Activated CD4-positive, alpha-beta memory T cell treated with anti-CD3 and anti-CD28 coated beads for 36 hours (primary cell): ENCODE measurements at regions of chr5 and their contacts with region 1.

Region 1: GRCh38 chr5:131417240-131417869 is 153.5 kb downstream of the CDC42SE2 start:
- DNase-seq: peak; percentile 88
- H3K4me3 Mint-ChIP-seq: peak overlapping the region; percentile 49
- H3K27ac Mint-ChIP-seq: peak overlapping the region; percentile 80
- H3K4me1 Mint-ChIP-seq: peaks cover 41% of the 10 kb centered on the region
- H3K27me3 Mint-ChIP-seq: no peaks in the 10 kb centered on the region

Region 2: DNA sequence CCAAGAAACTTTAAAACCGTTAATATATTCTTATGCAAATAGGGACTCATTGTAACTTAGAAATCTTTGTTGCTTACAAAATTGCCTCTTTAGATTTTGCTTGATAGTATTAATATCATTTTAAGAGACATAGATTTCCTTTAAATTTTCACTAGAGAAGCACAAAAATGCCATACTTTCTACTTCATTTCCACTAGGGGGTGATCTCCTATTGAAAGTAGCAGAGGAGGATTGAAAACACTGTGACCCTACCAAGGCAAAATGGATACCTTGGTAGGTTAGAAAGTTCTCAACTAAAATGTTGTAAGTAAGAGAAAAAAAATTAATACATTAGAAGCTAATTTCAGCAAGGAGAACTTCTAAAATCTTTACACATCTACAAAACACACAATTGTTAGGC is 1308.2 kb before region 1 on chr5:
- CTCF ChIA-PET with region 1: no interaction called
- POLR2A ChIA-PET with region 1: no interaction called
- intact Hi-C with region 1: loop called (anchors 5 kb)
- DNase-seq: no peak
- H3K4me3 Mint-ChIP-seq: no peak overlapping the region
- H3K27ac Mint-ChIP-seq: no peak overlapping the region
- H3K4me1 Mint-ChIP-seq: no peaks in the 10 kb centered on the region
- H3K27me3 Mint-ChIP-seq: no peaks in the 10 kb centered on the region

Region 3: GRCh38 chr5:130871346-130872086 is 545.8 kb before region 1 on chr5:
- CTCF ChIA-PET with region 1: interaction called, 5 read pairs
- POLR2A ChIA-PET with region 1: no interaction called
- intact Hi-C with region 1: loop called (anchors 1 kb)
- DNase-seq: peak; percentile 40
- H3K4me3 Mint-ChIP-seq: no peak overlapping the region
- H3K27ac Mint-ChIP-seq: no peak overlapping the region
- H3K4me1 Mint-ChIP-seq: peaks cover 8% of the 10 kb centered on the region
- H3K27me3 Mint-ChIP-seq: no peaks in the 10 kb centered on the region

Region 4: DNA sequence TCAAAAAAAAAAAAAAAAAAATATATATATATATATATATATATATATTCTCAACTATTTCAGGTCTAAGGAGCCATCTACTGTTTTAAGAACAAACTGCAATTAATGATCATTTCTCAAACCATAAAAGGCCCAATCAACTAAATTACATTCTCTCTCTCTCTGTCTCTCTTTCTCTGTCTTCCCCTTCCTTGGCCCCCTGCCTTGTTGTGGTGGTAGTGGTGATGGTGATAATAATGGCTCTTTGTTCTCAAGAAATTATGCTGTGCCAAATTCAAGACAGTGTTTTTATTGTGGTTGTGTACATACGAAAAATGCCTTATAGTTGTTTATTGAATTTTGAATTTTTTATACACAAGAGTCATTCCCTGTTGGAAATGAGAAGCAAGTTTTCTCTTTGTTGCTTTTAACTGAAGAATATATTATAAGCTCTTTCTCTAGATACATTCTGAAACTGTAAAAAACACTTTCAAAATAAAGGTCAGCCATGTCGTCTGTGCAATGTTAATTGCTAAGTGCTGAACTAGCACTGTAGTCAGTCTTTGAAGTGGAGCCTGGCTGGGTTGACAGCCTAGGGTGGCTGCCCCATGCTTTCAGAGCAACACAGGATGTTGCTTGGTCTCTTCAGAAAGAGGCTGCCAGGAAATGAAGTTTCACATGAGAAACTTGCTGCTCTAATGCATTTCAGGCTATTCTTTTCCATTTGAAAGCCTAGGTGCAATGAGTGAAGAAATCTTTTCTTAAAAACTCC is 348.3 kb before region 1 on chr5:
- CTCF ChIA-PET with region 1: no interaction called
- POLR2A ChIA-PET with region 1: no interaction called
- intact Hi-C with region 1: loop called (anchors 5 kb)
- DNase-seq: peak; percentile 79
- H3K4me3 Mint-ChIP-seq: peak overlapping the region; percentile 1
- H3K27ac Mint-ChIP-seq: peak overlapping the region; percentile 90
- H3K4me1 Mint-ChIP-seq: peaks cover 49% of the 10 kb centered on the region
- H3K27me3 Mint-ChIP-seq: no peaks in the 10 kb centered on the region

Region 5: GRCh38 chr5:131109540-131110255 is 307.7 kb before region 1 on chr5:
- CTCF ChIA-PET with region 1: no interaction called
- POLR2A ChIA-PET with region 1: no interaction called
- intact Hi-C with region 1: loop called (anchors 5 kb)
- DNase-seq: no peak
- H3K4me3 Mint-ChIP-seq: no peak overlapping the region
- H3K27ac Mint-ChIP-seq: no peak overlapping the region
- H3K4me1 Mint-ChIP-seq: peaks cover 3% of the 10 kb centered on the region
- H3K27me3 Mint-ChIP-seq: no peaks in the 10 kb centered on the region

Region 6: DNA sequence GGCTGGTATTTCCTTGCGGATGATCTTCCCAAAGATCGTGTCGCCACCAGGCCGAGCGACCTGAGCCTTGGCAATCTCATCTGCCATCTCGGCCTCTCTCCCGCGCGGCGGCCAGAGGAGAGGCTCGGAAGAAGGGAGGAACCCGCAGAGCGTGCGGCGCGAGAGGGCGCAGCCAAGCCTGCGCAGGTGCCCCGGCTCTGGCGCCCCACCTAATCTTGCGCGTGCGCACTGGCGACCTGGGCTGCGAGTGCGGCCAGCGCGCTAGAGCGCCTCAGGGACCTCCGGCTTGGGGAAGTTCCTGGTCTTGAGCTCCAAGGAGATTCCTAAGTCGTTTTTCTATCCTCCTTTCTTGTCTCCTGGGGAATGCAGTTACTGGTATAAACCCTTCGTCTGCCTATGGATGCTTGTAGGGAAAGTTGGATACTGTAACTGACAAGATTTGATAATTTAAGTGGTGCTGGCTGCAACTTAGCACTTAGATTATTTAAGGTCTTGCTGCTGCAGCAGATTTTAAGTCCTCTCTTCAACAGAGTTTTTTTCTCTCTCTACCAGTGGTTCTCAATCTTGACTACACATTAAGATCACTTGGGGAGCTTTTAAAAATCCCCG is 252.1 kb before region 1 on chr5 and contains the start of gene HINT1:
- CTCF ChIA-PET with region 1: interaction called, 3 read pairs
- POLR2A ChIA-PET with region 1: no interaction called
- intact Hi-C with region 1: loop called (anchors 1 kb)
- DNase-seq: peak; percentile 95
- H3K4me3 Mint-ChIP-seq: peak within 1 kb of the TSS; percentile 98
- H3K27ac Mint-ChIP-seq: peak within 1 kb of the TSS; percentile 99
- H3K4me1 Mint-ChIP-seq: peaks cover 45% of the 10 kb centered on the region
- H3K27me3 Mint-ChIP-seq: no peaks in the 10 kb centered on the region
- total RNA-seq, gene HINT1: 349 to 361 TPM

Region 7: DNA sequence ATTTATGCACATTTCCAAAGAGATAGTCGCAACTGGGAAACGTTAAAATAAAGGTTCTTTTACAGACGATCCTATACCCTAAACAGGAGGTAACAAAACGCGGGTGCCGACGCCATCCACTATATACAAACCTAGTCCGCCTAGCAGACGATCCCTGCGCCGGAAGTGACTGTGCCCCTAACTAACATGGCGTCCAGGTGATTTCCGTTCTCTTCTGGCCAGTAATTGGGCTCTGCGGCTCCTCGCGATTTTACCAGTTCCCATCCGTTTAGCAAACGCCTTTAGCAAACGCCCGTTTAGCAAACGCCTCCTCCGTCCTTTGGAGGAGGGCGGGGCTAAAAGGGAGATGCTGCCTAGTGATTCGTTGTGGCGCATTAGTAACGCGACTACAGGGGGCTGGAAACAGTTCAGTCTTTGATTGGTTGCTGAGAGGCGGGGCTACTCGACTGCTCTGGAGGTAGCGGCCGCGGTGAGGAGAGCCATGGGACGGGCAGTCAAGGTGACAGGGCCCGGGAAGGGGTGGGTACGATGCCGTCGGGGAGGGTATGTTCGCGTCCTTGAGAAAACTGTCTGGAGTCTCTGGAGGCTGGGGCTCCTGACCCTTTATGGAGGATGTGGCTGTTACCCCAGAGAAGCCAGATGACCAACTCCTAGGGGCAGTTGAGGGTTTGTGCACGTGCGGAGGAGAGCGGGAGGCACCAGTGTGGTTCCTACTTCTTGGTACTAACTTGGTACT is 246.6 kb before region 1 on chr5 and contains the start of gene LYRM7:
- CTCF ChIA-PET with region 1: interaction called, 3 read pairs
- POLR2A ChIA-PET with region 1: no interaction called
- intact Hi-C with region 1: loop called (anchors 1 kb)
- DNase-seq: peak; percentile 98
- H3K4me3 Mint-ChIP-seq: peak within 1 kb of the TSS; percentile 97
- H3K27ac Mint-ChIP-seq: peak within 1 kb of the TSS; percentile 92
- H3K4me1 Mint-ChIP-seq: peaks cover 37% of the 10 kb centered on the region
- H3K27me3 Mint-ChIP-seq: no peaks in the 10 kb centered on the region
- total RNA-seq, gene LYRM7: 16.6 to 18.6 TPM

Region 8: DNA sequence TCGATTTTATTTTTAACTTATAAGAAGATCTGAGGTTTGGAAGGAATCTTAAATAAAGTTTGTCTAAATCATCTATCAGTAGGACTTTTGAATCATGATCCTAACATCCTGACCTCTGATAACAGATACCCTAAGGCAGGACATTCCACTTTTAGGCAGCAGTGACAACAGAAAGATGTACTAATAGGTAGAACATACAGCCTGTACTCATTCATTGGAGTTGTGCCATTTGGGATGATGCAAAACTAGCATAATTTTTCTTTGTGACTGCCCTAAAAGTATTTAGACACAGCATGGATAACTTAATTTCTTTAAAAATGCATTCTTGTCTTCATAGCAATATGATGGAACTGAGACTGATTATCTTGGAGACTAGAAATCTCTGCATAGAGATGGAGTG is 113.8 kb before region 1 on chr5:
- CTCF ChIA-PET with region 1: no interaction called
- POLR2A ChIA-PET with region 1: no interaction called
- intact Hi-C with region 1: no loop called
- DNase-seq: no peak
- H3K4me3 Mint-ChIP-seq: no peak overlapping the region
- H3K27ac Mint-ChIP-seq: peak overlapping the region; percentile 61
- H3K4me1 Mint-ChIP-seq: peaks cover 66% of the 10 kb centered on the region
- H3K27me3 Mint-ChIP-seq: no peaks in the 10 kb centered on the region

Region 9: GRCh38 chr5:131450953-131451352 is 33.6 kb after region 1 on chr5:
- CTCF ChIA-PET with region 1: no interaction called
- POLR2A ChIA-PET with region 1: no interaction called
- intact Hi-C with region 1: no loop called
- DNase-seq: no peak
- H3K4me3 Mint-ChIP-seq: no peak overlapping the region
- H3K27ac Mint-ChIP-seq: no peak overlapping the region
- H3K4me1 Mint-ChIP-seq: peaks cover 27% of the 10 kb centered on the region
- H3K27me3 Mint-ChIP-seq: no peaks in the 10 kb centered on the region